ENCODE measurements at regions of chr10 and their contacts with region 1.

Region 1: GRCh38 chr10:104209575-104210198 is 22.5 kb downstream of the CFAP43 start:
- DNase-seq: peak in 2 of 4 donors; percentile 22 to 54
- ATAC-seq: peak; percentile 87
- H3K4me3 ChIP-seq: no peak overlapping the region
- H3K27ac ChIP-seq: no peak overlapping the region
- H3K4me1 ChIP-seq: no peaks in the 10 kb centered on the region
- H3K27me3 ChIP-seq: no peaks in the 10 kb centered on the region
- CTCF ChIP-seq: peak; percentile 40 to 49

Region 2: DNA sequence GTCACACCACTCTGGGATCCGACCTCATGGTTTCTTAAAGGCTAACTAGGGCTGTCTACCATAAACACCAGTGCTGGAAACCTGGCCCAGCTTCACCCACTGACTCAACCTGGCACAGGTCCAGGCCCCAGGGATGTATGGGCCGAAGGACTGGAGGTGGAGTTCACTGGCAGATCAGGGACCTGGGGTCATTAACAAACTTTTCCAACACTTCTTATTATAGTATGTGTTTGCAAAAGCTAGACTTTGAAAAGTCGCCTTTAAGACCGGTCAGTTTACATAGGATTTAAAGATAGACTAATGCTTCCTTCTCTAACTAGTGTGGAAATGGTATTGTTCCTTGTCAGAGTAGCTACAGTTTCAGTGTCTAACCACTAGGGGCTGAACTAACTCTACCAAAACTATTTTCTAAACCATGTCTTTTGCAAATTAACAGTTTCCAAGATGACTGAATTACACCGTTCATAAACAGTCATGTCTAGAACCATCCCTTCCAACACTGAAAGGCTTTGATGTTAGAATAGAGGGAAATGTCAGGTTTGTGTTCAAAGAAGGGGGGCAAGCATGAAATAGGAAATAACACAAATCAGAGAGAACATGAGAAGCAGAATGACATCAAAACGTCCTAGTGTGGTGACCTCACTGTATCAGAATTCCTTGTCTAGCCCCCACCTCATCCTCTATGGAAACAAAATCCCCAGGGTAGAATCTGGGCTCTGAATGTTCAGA is 321.4 kb before region 1 on chr10:
- intact Hi-C with region 1: loop called in 1 of 2 experiments (anchors 10 kb)
- DNase-seq: peak; percentile 62 to 83 (median 70)
- ATAC-seq: peak; percentile 63
- H3K4me3 ChIP-seq: no peak overlapping the region
- H3K27ac ChIP-seq: peak overlapping the region; percentile 82 to 84
- H3K4me1 ChIP-seq: peaks cover 6 to 56% of the 10 kb centered on the region in 2 donors
- H3K27me3 ChIP-seq: no peaks in the 10 kb centered on the region
- CTCF ChIP-seq: peak; percentile 83 to 85

Region 3: DNA sequence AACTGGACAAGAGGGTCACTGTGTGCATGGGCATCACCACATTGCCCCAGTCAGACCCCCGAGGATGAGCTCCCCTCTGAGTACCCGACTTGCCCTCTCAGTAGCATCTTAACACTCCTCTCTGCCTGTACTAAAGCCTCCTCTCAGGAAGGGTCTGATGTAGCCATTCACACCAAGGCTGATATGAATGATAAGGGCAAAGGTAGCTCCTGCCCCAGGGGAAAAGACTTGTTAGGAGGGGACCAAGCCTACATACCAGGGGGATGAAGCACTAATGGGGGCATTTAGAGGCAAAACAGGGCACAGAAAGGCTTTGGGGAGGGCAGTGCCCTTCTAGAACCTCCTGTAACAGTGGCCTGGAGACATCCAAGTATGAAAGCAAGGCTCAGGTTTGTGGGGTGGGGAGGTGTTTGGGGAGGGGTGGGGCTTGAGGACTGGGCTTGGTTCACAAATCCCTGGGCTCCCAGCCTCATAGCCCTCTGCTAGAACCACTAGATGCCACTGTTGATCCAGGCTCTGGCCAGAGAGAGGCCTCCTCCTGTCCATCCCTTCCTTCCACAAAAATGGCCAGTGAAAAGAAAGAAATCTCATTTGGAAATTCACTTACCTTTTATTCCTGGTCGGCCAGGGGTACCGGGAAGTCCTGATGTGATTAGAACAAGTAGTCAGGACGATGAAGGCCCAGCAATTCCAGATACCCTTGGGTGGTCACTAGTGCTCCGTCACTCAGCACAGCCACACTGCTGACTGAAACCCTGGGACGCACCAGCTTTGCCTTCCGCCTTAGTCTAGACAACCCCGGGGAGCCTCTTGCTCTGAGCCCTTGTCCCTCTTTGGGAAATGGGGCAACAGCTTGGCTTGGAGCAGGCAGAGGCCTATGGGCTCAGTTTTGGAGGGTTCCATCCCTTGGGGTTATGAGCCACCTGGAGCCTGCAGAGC is 164.3 kb before region 1 on chr10:
- intact Hi-C with region 1: loop called in 1 of 2 experiments (anchors 10 kb)
- DNase-seq: peak in 3 of 4 donors; percentile 28 to 60 (median 57)
- ATAC-seq: peak; percentile 94
- H3K4me3 ChIP-seq: no peak overlapping the region
- H3K27ac ChIP-seq: no peak overlapping the region
- H3K4me1 ChIP-seq: peaks cover 9 to 11% of the 10 kb centered on the region in 2 donors
- H3K27me3 ChIP-seq: no peaks in the 10 kb centered on the region
- CTCF ChIP-seq: peak; percentile 47 to 51